CD14-positive monocyte (primary cell): ENCODE measurements at regions of chr16 and their contacts with region 1.

Region 1: GRCh38 chr16:77190478-77191258 is at the start of gene MON1B:
- DNase-seq: peak; percentile 97 to 98 (median 98)
- H3K4me3 ChIP-seq: peak within 1 kb of the TSS; percentile 95 to 99 (median 98)
- H3K4me3 Mint-ChIP-seq: peak within 1 kb of the TSS; percentile 91 to 97
- H3K27ac ChIP-seq: peak within 1 kb of the TSS; percentile 98 to 100
- H3K27ac Mint-ChIP-seq: peak within 1 kb of the TSS; percentile 99 to 100 (median 100)
- H3K4me1 ChIP-seq: peaks cover 21 to 34% of the 10 kb centered on the region in 2 donors
- H3K4me1 Mint-ChIP-seq: peaks cover 29% of the 10 kb centered on the region
- H3K27me3 ChIP-seq: peaks cover 0 to 2% of the 10 kb centered on the region in 2 donors
- H3K27me3 Mint-ChIP-seq: peaks cover 1 to 5% (median 2%) of the 10 kb centered on the region in 3 donors
- CTCF ChIP-seq: no peak
- polyA plus RNA-seq, gene MON1B: 26.4 to 35.7 (median 35.6) TPM

Region 2: GRCh38 chr16:77722309-77723107 is 531.8 kb after region 1 on chr16 and contains the start of gene NUDT7:
- intact Hi-C with region 1: loop called in 1 of 2 experiments (anchors 10 kb)
- DNase-seq: peak; percentile 94 to 95 (median 94)
- H3K4me3 ChIP-seq: peak within 1 kb of the TSS; percentile 71 to 99 (median 95)
- H3K4me3 Mint-ChIP-seq: peak within 1 kb of the TSS; percentile 88 to 92
- H3K27ac ChIP-seq: peak within 1 kb of the TSS; percentile 82 to 85
- H3K27ac Mint-ChIP-seq: peak within 1 kb of the TSS; percentile 78 to 88 (median 83)
- H3K4me1 ChIP-seq: peaks cover 20 to 24% of the 10 kb centered on the region in 2 donors
- H3K4me1 Mint-ChIP-seq: peaks cover 18% of the 10 kb centered on the region
- H3K27me3 ChIP-seq: no peaks in the 10 kb centered on the region
- H3K27me3 Mint-ChIP-seq: peaks cover 0 to 8% (median 8%) of the 10 kb centered on the region in 3 donors
- CTCF ChIP-seq: no peak
- polyA plus RNA-seq, gene NUDT7: 4.2 to 6.1 (median 5.0) TPM

Region 3: DNA sequence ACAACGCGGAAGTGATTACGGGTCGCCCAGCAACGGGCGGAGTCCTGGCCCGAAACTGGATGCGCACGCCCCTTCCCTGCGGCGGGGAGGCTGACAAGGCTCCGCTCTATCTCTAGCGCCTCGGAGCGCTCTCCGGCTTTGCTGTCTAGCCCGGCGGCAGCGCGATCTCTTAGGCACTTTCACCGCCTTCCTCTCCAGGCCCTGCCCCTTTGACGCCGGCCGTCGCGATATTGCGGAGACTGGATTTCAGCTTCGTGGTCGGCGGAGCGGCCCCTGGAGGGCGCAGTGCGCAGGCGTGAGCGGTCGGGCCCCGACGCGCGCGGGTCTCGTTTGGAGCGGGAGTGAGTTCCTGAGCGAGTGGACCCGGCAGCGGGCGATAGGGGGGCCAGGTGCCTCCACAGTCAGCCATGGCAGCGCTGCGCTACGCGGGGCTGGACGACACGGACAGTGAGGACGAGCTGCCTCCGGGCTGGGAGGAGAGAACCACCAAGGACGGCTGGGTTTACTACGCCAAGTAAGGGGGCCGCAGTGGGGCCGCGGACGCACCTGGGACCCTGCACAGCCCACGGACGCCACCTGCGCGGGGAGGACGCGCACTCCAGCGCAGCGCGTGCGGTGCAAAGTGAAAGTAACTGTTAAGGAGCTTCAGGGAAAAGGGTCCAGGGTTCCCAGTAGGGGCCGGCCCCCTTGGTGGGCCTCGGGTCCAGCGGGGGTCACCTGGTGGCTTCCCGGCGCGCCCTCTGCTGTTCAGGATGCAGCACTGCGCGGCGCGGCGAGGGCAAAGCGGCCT is 908.9 kb after region 1 on chr16 and contains the start of gene WWOX:
- intact Hi-C with region 1: loop called (anchors 10 kb)
- DNase-seq: peak; percentile 96 to 98 (median 96)
- H3K4me3 ChIP-seq: peak within 1 kb of the TSS; percentile 78 to 99 (median 93)
- H3K4me3 Mint-ChIP-seq: peak within 1 kb of the TSS; percentile 90 to 95
- H3K27ac ChIP-seq: peak within 1 kb of the TSS; percentile 88
- H3K27ac Mint-ChIP-seq: peak within 1 kb of the TSS; percentile 83 to 94 (median 92)
- H3K4me1 ChIP-seq: peaks cover 14 to 17% of the 10 kb centered on the region in 2 donors
- H3K4me1 Mint-ChIP-seq: peaks cover 12% of the 10 kb centered on the region
- H3K27me3 ChIP-seq: no peaks in the 10 kb centered on the region
- H3K27me3 Mint-ChIP-seq: peaks cover 1 to 5% (median 2%) of the 10 kb centered on the region in 3 donors
- CTCF ChIP-seq: peak; percentile 94
- polyA plus RNA-seq, gene WWOX: 4.0 to 7.0 (median 6.3) TPM